ENCODE measurements at regions of chr12 and their contacts with region 1.

Region 1: GRCh38 chr12:26953447-26953846 is 15.2 kb downstream of the FGFR1OP2 start:
- DNase-seq: no peak
- ATAC-seq: peak; percentile 46
- H3K4me3 ChIP-seq: no peak overlapping the region
- H3K27ac ChIP-seq: no peak overlapping the region
- H3K4me1 ChIP-seq: no peaks in the 10 kb centered on the region
- H3K27me3 ChIP-seq: no peaks in the 10 kb centered on the region
- CTCF ChIP-seq: no peak
- EP300 ChIP-seq: no peak
- POLR2A ChIP-seq: no peak
- RAD21 ChIP-seq: no peak

Region 2: GRCh38 chr12:26937875-26938700 is 15.4 kb before region 1 on chr12 and contains the starts of genes FGFR1OP2 and INTS13:
- CTCF ChIA-PET with region 1: interaction called, 3 read pairs
- POLR2A ChIA-PET with region 1: interaction called, 8 read pairs
- RAD21 ChIA-PET with region 1: no interaction called
- SMC1A ChIA-PET with region 1: interaction called, 28 read pairs
- in situ Hi-C with region 1: no loop called
- intact Hi-C with region 1: no loop called
- DNase-seq: peak; percentile 95
- ATAC-seq: peak; percentile 87
- H3K4me3 ChIP-seq: peak within 1 kb of the TSS; percentile 99
- H3K27ac ChIP-seq: peak within 1 kb of the TSS; percentile 94
- H3K4me1 ChIP-seq: peaks cover 5% of the 10 kb centered on the region
- H3K27me3 ChIP-seq: no peaks in the 10 kb centered on the region
- CTCF ChIP-seq: no peak
- EP300 ChIP-seq: peak in 1 of 2 experiments; percentile 27; a peak in 1 of 4 replicates
- POLR2A ChIP-seq: peak; percentile 97
- RAD21 ChIP-seq: no peak
- polyA plus RNA-seq, gene FGFR1OP2: 29.0 to 32.2 TPM
- polyA plus RNA-seq, gene INTS13: 43.4 to 65.4 TPM